Mammary epithelial cell (primary cell): ENCODE measurements at regions of chr16 and their contacts with region 1.

Region 1: DNA sequence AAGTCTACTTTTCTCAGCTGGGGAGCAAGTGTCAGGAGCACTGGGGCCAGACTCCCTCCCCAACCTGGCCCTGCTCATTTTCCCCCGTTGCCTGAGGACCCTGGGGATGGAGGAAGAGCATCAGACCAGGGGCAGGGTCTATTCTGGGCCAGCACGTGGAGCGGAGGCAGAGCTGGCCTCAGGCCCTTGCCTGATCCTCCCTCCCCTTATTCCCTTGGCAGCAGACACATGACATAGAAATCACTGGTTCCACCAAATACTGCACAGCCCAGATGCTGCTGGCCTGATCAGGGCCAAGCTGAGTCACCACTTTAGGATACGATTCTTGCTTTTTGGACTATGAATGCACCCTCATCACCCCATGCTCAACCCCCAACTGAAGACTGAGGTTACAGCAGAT is 15.8 kb upstream of the AGRP start:
- DNase-seq: no peak
- H3K4me3 ChIP-seq: no peak overlapping the region
- H3K27ac ChIP-seq: no peak overlapping the region
- H3K4me1 ChIP-seq: no peaks in the 10 kb centered on the region
- H3K27me3 ChIP-seq: no peaks in the 10 kb centered on the region
- CTCF ChIP-seq: no peak

Region 2: GRCh38 chr16:67399181-67399733 is 99.8 kb before region 1 on chr16:
- CTCF ChIA-PET with region 1: no interaction called
- dilution Hi-C with region 1: no loop called
- in situ Hi-C with region 1: no loop called
- intact Hi-C with region 1: no loop called
- DNase-seq: no peak
- H3K4me3 ChIP-seq: no peak overlapping the region
- H3K27ac ChIP-seq: no peak overlapping the region
- H3K4me1 ChIP-seq: peaks cover 45% of the 10 kb centered on the region
- H3K27me3 ChIP-seq: no peaks in the 10 kb centered on the region
- CTCF ChIP-seq: peak in 1 of 2 donors; percentile 50

Region 3: GRCh38 chr16:67447508-67448076 is 51.5 kb before region 1 on chr16:
- CTCF ChIA-PET with region 1: no interaction called
- dilution Hi-C with region 1: loop called (anchors 5 kb)
- in situ Hi-C with region 1: no loop called
- intact Hi-C with region 1: no loop called
- DNase-seq: no peak
- H3K4me3 ChIP-seq: no peak overlapping the region
- H3K27ac ChIP-seq: no peak overlapping the region
- H3K4me1 ChIP-seq: no peaks in the 10 kb centered on the region
- H3K27me3 ChIP-seq: no peaks in the 10 kb centered on the region
- CTCF ChIP-seq: peak; percentile 47 to 48

Region 4: GRCh38 chr16:67480833-67481560 is 18.1 kb before region 1 on chr16 and contains the start of gene ATP6V0D1:
- CTCF ChIA-PET with region 1: no interaction called
- dilution Hi-C with region 1: no loop called
- in situ Hi-C with region 1: no loop called
- intact Hi-C with region 1: no loop called
- DNase-seq: peak; percentile 97
- H3K4me3 ChIP-seq: peak within 1 kb of the TSS; percentile 81 to 97 (median 95)
- H3K27ac ChIP-seq: peak within 1 kb of the TSS; percentile 93
- H3K4me1 ChIP-seq: peaks cover 18% of the 10 kb centered on the region
- H3K27me3 ChIP-seq: no peaks in the 10 kb centered on the region
- CTCF ChIP-seq: peak; percentile 69 to 89
- total RNA-seq, gene ATP6V0D1: 93.3 to 124 TPM

Region 5: GRCh38 chr16:67514382-67514828 is 15.3 kb after region 1 on chr16:
- CTCF ChIA-PET with region 1: no interaction called
- dilution Hi-C with region 1: no loop called
- in situ Hi-C with region 1: no loop called
- intact Hi-C with region 1: loop called (anchors 1 kb)
- DNase-seq: peak; percentile 75
- H3K4me3 ChIP-seq: no peak overlapping the region
- H3K27ac ChIP-seq: no peak overlapping the region
- H3K4me1 ChIP-seq: peaks cover 8% of the 10 kb centered on the region
- H3K27me3 ChIP-seq: no peaks in the 10 kb centered on the region
- CTCF ChIP-seq: peak; percentile 52 to 67

Region 6: GRCh38 chr16:67667817-67668494 is 168.8 kb after region 1 on chr16:
- CTCF ChIA-PET with region 1: no interaction called
- dilution Hi-C with region 1: no loop called
- in situ Hi-C with region 1: no loop called
- intact Hi-C with region 1: loop called (anchors 1 kb)
- DNase-seq: peak; percentile 81
- H3K4me3 ChIP-seq: no peak overlapping the region
- H3K27ac ChIP-seq: no peak overlapping the region
- H3K4me1 ChIP-seq: peaks cover 19% of the 10 kb centered on the region
- H3K27me3 ChIP-seq: no peaks in the 10 kb centered on the region
- CTCF ChIP-seq: peak; percentile 94 to 95